ENCODE measurements at regions of chr10 and their contacts with region 1.

Region 1: DNA sequence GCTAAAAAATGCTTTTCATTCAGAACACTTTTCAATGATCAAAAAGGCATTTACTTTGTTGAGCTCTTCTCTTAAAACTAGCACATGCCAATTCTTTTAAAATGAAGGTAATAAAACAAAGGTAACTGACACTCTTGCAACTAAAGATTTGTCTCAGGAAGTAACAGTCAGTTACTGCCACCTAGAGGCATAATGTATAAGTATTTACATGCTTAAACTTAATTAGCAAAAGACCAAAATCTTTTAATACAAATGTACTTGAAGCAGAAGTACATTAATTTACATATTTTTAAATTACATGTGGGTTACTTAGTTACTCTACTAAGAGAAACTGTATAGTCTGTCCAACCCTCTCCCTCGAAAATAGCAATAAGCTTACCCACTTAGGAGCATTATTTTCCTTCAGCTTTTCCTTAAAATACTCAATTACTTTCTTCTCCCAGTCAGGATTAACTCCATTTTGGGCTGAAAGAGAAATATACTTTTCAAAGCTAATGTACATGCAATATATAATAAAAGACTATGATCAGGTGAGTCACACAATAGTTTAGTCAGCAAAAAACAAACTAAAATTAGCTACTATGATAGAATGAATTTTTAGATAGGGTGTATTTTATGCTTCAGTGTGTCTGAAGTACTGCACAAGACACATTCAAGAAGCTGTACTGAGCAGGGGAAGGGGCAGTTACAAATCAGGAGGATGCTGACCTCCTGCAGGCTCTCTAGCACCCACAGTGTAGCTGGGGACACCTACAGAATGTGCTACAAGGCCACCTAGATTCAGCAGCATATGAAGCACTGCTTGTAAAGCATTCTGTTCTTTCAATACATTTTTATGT is 13.0 kb downstream of the MCMBP start:
- DNase-seq: no peak
- H3K4me3 Mint-ChIP-seq: no peak overlapping the region
- H3K27ac Mint-ChIP-seq: no peak overlapping the region
- H3K4me1 Mint-ChIP-seq: peaks cover 32% of the 10 kb centered on the region
- H3K27me3 Mint-ChIP-seq: no peaks in the 10 kb centered on the region

Region 2: GRCh38 chr10:119608316-119609155 is 251.1 kb before region 1 on chr10:
- CTCF ChIA-PET with region 1: interaction called, 13 read pairs
- DNase-seq: peak; percentile 39
- H3K4me3 Mint-ChIP-seq: no peak overlapping the region
- H3K27ac Mint-ChIP-seq: no peak overlapping the region
- H3K4me1 Mint-ChIP-seq: peaks cover 3% of the 10 kb centered on the region
- H3K27me3 Mint-ChIP-seq: peaks cover 27% of the 10 kb centered on the region

Region 3: DNA sequence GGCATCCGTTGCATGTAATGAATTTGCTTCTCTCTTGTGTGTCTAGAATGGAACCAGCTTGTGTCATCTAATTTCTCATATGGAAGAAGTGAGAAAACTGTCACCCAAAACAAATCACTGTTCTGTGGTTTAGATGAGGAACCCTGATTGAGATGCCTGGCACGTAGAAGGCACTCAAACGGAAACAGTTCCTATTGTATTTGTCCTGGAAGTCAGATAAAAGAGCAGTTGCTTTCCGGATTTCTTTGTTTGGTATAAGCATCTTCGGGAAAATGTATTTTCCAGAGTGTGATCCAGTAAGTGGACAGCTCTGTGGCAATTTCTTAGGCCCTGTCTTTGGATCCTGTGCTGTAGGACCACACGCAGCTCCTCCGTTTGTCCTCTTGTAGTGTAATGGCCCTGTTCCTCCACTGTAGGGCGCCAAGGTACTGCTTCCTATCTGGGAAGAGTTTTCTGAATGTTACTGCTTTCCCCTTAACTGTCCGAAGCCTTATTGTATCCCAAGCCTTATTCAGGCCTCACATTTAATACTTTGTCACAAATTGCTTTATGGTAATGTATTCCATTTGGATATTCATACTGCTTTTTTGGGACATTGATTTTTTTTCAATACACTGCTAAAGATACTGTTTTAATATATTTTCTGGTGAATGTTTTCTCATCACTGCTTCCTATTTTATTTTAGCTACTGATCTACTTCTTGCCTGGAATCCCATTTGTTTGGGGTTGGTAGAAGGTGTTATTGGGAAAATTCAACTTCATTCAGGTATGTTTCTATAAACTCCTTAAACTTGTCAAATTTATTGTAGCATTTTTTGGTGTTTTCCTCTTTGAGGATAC is 109.0 kb before region 1 on chr10:
- CTCF ChIA-PET with region 1: interaction called, 66 read pairs
- DNase-seq: peak; percentile 72
- H3K4me3 Mint-ChIP-seq: no peak overlapping the region
- H3K27ac Mint-ChIP-seq: no peak overlapping the region
- H3K4me1 Mint-ChIP-seq: peaks cover 2% of the 10 kb centered on the region
- H3K27me3 Mint-ChIP-seq: no peaks in the 10 kb centered on the region

Region 4: GRCh38 chr10:119872860-119873681 is 13.4 kb after region 1 on chr10:
- CTCF ChIA-PET with region 1: interaction called, 19 read pairs
- DNase-seq: peak; percentile 91
- H3K4me3 Mint-ChIP-seq: peak overlapping the region; percentile 81
- H3K27ac Mint-ChIP-seq: peak overlapping the region; percentile 88
- H3K4me1 Mint-ChIP-seq: peaks cover 44% of the 10 kb centered on the region
- H3K27me3 Mint-ChIP-seq: peaks cover 10% of the 10 kb centered on the region

Region 5: DNA sequence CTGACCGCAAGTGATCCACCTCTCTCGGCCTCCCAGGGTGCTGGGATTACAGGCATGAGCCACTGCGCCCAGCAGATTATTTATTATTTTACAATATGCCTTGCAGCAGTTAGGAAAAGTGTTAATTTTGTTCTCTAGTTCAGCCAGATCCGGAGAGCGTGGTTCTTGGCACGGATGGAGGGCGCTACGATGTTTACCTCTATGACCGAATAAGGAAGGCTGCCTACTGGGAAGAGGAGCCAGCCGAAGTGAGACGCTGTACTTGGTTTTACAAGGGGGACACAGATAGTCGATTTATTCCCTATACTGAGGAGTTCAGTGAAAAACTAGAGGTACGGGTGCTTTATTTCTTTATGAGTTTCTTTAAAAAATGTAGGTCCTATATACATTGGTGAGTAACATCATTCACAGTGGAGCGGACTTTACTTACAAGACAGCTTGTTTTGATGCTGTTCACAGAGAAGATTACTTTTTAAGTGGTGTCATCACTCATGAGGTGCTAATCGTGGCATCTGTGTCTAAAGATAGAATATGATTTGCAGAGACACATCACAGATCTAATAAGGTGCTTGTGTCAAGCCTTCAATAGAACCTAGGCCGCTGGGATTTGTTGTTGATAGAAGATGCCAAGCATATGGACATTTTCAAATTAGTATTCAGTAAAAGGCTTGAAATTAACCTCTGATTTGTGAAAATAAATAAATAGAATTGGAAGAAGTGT is 44.5 kb after region 1 on chr10:
- CTCF ChIA-PET with region 1: no interaction called
- DNase-seq: no peak
- H3K4me3 Mint-ChIP-seq: no peak overlapping the region
- H3K27ac Mint-ChIP-seq: no peak overlapping the region
- H3K4me1 Mint-ChIP-seq: peaks cover 4% of the 10 kb centered on the region
- H3K27me3 Mint-ChIP-seq: no peaks in the 10 kb centered on the region

Measured in activated naive CD4-positive, alpha-beta T cell treated with anti-CD3 and anti-CD28 coated beads, Interleukin-2, amount 10 ng/mL, durations not matched to agents 7 days and 5 days (primary cell).